BJ (cell line): ENCODE measurements at regions of chr4 and their contacts with region 1.

Region 1: GRCh38 chr4:139603576-139604387 is 47.8 kb upstream of the SETD7 start:
- DNase-seq: no peak
- H3K4me3 ChIP-seq: no peak overlapping the region
- H3K27me3 ChIP-seq: no peaks in the 10 kb centered on the region
- CTCF ChIP-seq: peak; percentile 70

Region 2: DNA sequence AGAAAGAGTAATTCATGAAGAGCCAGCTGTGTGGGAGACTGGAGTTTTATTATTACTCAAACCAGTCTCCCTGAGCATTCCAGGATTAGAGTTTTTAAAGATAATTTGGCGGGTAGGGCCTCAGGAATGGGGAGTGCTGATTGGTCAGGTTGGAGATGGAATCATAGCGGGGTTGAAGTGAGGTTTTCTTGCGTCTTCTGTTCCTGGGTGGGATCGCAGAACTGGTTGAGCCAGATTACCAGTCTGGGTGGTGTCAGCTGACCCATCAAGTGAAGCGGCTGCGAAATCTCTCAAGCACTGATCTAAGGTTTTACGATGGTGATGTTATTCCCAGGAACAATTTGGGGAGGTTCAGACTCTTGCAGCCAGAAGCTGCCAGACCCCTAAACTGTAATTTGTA is 22.7 kb before region 1 on chr4:
- CTCF ChIA-PET with region 1: interaction called, 14 read pairs
- POLR2A ChIA-PET with region 1: no interaction called
- DNase-seq: no peak
- H3K4me3 ChIP-seq: no peak overlapping the region
- H3K27me3 ChIP-seq: peaks cover 4% of the 10 kb centered on the region
- CTCF ChIP-seq: no peak

Region 3: DNA sequence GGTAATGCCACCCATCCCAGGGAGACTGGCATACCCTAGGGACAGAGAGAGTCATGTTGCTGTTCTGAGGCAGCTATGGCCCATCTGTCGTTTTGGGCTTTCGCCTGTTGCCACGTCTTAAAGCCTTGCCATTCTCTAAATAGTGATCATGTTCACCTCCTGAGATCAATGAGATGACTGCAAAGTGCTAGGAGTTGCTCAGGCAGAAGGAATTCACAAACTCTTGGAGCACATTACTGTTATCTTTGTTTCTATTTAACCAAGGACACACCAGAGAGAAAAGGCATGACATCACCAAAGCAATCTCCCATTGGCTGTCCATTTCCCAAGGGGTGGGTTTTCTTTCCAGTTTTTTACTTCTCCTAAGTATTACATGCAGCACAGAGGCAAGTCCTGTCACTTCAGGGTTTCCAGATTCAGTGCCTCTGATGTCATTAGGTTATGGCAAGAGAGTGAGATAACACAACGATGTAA is 10.7 kb before region 1 on chr4:
- CTCF ChIA-PET with region 1: interaction called, 16 read pairs
- POLR2A ChIA-PET with region 1: no interaction called
- DNase-seq: no peak
- H3K4me3 ChIP-seq: no peak overlapping the region
- H3K27me3 ChIP-seq: peaks cover 4% of the 10 kb centered on the region; the same call in 1 of the 2 replicates
- CTCF ChIP-seq: no peak

Region 4: DNA sequence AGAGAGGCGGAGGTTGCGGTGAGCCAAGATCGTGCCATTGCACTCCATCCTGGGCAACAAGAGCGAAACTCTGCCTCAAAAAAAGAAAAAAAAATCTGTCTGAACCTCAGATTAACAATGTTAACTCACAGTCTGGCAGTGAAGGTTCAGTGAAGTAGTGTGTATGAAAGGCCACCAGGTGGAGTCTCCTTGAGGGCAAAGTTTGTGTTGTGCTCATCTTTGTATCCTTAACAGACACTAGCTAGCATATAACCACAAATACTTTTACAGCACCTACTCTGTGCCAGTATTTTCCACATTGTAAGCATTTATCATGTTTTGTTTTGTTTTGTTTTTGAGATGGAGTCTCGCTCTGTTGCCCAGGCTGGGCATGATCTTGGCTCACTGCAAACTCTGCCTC is 15.9 kb after region 1 on chr4:
- CTCF ChIA-PET with region 1: interaction called, 18 read pairs
- POLR2A ChIA-PET with region 1: no interaction called
- DNase-seq: no peak
- H3K4me3 ChIP-seq: no peak overlapping the region
- H3K27me3 ChIP-seq: no peaks in the 10 kb centered on the region; the same call in 1 of the 2 replicates
- CTCF ChIP-seq: peak; percentile 57

Region 5: GRCh38 chr4:139625482-139625881 is 21.7 kb after region 1 on chr4:
- CTCF ChIA-PET with region 1: interaction called, 18 read pairs
- POLR2A ChIA-PET with region 1: no interaction called
- DNase-seq: no peak
- H3K4me3 ChIP-seq: no peak overlapping the region
- H3K27me3 ChIP-seq: peaks cover 9% of the 10 kb centered on the region
- CTCF ChIP-seq: no peak

Region 6: DNA sequence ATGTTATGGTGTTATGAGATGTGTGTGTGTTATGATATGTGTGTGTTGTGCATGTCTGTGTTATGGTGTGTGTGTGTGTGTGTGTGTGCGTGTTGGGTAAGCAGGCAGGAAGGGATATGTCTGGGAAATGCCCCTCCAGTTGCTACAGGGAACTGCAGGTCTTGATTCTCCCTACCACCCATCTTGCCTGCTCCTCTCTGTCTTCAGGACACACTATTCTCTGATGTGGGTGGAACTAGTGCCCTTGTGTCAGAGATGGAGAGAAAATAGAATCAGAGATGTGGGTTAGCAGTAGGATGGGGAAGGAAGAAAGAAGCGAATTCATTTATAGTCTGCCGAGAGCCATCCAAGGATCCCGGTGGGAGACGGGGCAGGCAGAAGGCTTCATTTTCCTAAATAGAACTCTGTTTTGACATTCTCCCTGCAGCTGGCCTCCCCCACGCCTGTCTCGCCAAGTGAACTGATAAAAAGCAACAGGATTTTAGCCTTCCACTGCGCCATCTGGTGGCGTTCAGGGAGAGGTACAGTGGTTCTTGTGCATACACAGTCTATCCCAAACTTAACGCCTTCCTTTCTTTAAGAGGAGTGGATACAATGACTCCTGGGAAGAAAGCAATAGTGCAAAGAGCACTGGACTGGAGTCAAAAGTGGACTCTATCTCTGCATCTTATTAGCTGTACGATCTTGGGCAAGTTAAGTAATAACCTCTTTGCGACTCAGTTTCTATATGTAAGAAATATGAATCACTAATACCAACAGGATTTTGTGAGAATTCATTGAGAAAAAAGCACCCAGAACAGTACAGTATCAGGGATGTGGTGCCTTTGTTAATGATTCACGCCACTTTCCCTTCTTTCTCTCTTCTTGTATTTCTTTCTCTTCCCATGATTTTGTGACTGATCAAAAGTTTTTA is 47.8 kb after region 1 on chr4:
- CTCF ChIA-PET with region 1: interaction called, 149 read pairs
- POLR2A ChIA-PET with region 1: no interaction called
- DNase-seq: no peak
- H3K4me3 ChIP-seq: no peak overlapping the region
- H3K27me3 ChIP-seq: no peaks in the 10 kb centered on the region
- CTCF ChIP-seq: peak; percentile 90

Region 7: GRCh38 chr4:139656614-139657486 is 53.1 kb after region 1 on chr4:
- CTCF ChIA-PET with region 1: interaction called, 149 read pairs
- POLR2A ChIA-PET with region 1: no interaction called
- DNase-seq: no peak
- H3K4me3 ChIP-seq: no peak overlapping the region
- H3K27me3 ChIP-seq: no peaks in the 10 kb centered on the region
- CTCF ChIP-seq: peak; percentile 92